ENCODE measurements at regions of chr3 and their contacts with region 1.

Region 1: GRCh38 chr3:112531358-112531781 is 30.4 kb downstream of the ATG3 start:
- DNase-seq: no peak
- ATAC-seq: no peak

Region 2: DNA sequence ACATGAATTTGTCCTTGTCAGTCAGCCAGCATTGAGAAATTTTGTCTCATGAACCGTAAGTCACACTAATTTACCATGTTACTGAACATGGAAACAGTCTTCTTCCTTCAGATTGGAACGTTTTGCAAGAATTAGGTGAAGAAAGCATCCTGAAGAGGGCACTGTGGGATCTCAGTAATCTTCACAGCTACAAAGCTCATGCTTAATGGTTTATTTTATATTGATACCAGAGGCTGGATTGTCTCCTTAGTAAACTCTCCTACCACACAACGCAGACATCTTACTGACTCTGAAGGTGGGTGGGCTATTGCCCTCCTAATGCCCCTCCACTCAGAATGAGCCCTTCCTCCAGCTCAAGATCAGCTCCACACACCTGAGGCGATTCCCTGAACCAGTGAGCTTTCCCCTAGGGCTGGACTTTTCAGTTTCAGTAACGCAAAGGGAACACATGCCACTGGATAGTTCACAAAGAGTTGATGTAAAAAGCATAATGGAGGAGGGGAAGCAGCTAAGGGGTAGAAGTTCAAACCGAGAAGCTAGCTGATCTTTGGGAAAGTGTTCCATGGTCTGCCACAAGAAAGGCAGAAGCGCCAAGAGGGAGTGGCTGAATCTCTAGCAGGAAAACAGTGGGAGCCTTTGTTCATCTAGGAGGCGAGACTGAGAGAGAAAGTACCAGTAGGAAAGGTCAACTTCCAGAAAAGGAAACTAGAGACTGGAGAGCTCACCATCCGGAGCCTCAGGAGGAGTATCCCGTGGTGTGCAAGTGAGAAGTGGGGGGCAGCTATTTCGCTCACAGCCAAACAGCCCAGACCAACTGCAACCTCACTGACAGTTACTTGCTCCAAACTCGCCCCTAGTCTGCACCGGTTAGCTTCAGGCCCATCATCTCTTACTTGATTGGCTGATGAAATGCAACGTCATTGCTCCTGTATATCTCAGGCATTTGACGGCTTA is 237.7 kb before region 1 on chr3 and contains the start of gene SLC9C1:
- intact Hi-C with region 1: loop called (anchors 5 kb)
- DNase-seq: no peak
- ATAC-seq: peak; percentile 94
- total RNA-seq, gene SLC9C1: 2.3 TPM